ENCODE measurements at regions of chr1 and their contacts with region 1.

Region 1: GRCh38 chr1:214386747-214387146 is 105.8 kb downstream of the SMYD2 start:
- DNase-seq: peak in 1 of 2 experiments; percentile 33
- H3K4me3 ChIP-seq: no peak overlapping the region
- H3K27ac ChIP-seq: no peak overlapping the region
- H3K4me1 ChIP-seq: peaks cover 0 to 5% (median 2%) of the 10 kb centered on the region in 4 experiments; a peak in 3 of 7 replicates
- H3K27me3 ChIP-seq: no peaks in the 10 kb centered on the region
- CTCF ChIP-seq: no peak
- EP300 ChIP-seq: no peak
- POLR2A ChIP-seq: no peak
- RAD21 ChIP-seq: no peak

Region 2: GRCh38 chr1:214370615-214371014 is 16.1 kb before region 1 on chr1:
- CTCF ChIA-PET with region 1: interaction called, 12 read pairs
- POLR2A ChIA-PET with region 1: no interaction called
- DNase-seq: no peak
- H3K4me3 ChIP-seq: no peak overlapping the region
- H3K27ac ChIP-seq: no peak overlapping the region
- H3K4me1 ChIP-seq: no peaks in the 10 kb centered on the region; a peak in 1 of 7 replicates
- H3K27me3 ChIP-seq: no peaks in the 10 kb centered on the region
- CTCF ChIP-seq: no peak
- EP300 ChIP-seq: no peak
- POLR2A ChIP-seq: no peak; a peak in 1 of 3 replicates
- RAD21 ChIP-seq: no peak